PC-3 (cell line): ENCODE measurements at regions of chr3 and their contacts with region 1.

Region 1: GRCh38 chr3:134473868-134474546 is 11.8 kb downstream of the ANAPC13 start:
- DNase-seq: peak; percentile 90
- ATAC-seq: peak; percentile 26
- H3K4me3 ChIP-seq: no peak overlapping the region
- H3K27ac ChIP-seq: no peak overlapping the region
- H3K4me1 ChIP-seq: peaks cover 26% of the 10 kb centered on the region
- H3K27me3 ChIP-seq: no peaks in the 10 kb centered on the region
- CTCF ChIP-seq: peak; percentile 77

Region 2: DNA sequence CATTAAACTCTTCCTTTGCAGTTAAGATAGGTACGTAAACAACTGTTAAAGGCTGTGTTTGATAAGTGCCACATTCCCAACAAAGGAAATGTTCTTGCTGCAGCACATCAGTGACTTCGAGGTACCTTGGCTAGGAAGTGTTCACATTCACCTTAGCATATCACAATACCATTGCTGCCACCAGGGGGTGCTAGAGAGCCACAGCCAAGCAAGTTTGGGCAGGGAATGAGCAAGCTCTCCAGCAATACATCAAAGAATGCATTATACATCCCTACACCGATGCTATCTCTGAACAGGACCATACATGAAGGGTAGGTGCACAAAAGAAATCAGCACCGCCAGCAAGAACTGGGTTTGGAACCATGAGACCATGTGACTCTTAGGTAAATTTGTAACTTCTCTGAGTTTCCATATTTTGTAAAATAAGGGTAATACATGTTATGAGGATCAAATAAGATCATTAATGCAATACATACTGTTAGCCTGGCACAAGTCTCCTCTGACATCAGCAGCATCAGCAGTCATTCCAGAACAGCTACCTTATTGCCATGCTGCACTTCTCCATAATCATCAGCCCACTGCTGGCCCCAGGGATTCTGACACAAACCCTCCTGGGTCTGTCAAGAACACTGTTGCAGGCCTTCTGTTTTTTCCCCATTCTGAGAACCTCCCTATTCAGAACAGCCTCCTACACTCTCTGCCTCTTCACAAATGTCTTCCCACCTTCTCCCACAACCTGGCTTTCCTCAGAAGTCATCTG is 260.9 kb before region 1 on chr3:
- CTCF ChIA-PET with region 1: no interaction called
- POLR2A ChIA-PET with region 1: no interaction called
- intact Hi-C with region 1: loop called (anchors 2 kb)
- DNase-seq: peak; percentile 86
- ATAC-seq: peak; percentile 96
- H3K4me3 ChIP-seq: no peak overlapping the region
- H3K27ac ChIP-seq: no peak overlapping the region
- H3K4me1 ChIP-seq: no peaks in the 10 kb centered on the region
- H3K27me3 ChIP-seq: no peaks in the 10 kb centered on the region
- CTCF ChIP-seq: peak; percentile 87

Region 3: DNA sequence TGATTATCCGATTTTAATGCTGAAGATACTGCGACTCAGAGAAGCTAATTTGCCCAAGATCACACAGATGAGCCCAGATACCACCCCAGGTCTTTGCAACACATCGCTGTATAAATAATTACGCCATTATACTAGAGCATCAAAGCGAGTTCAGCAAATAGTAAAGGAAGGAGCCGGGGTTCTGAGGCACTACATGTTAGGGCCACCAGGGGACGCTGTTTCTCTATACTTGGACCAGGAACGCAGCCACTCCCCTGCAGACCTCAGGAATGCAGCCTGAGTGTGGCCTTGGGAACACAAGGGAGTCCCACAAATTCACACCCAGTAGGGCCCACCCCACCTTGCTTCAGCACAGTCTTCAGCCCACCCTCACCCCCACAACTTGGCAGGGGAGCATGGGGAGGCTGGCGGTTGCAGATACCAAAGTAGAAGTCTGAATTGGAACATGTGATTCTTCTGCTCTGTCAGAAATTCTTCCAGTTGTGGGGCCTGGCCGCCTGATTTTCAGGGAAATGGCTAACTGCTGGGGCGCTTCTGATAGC is 165.6 kb before region 1 on chr3:
- CTCF ChIA-PET with region 1: interaction called, 3 read pairs
- POLR2A ChIA-PET with region 1: no interaction called
- intact Hi-C with region 1: loop called (anchors 1 kb)
- DNase-seq: peak; percentile 86
- ATAC-seq: peak; percentile 75
- H3K4me3 ChIP-seq: peak overlapping the region; percentile 67
- H3K27ac ChIP-seq: no peak overlapping the region
- H3K4me1 ChIP-seq: peaks cover 38% of the 10 kb centered on the region
- H3K27me3 ChIP-seq: no peaks in the 10 kb centered on the region
- CTCF ChIP-seq: peak; percentile 92

Region 4: GRCh38 chr3:134364061-134364935 is 109.7 kb before region 1 on chr3:
- CTCF ChIA-PET with region 1: interaction called, 4 read pairs
- POLR2A ChIA-PET with region 1: interaction called, 3 read pairs
- intact Hi-C with region 1: loop called (anchors 2 kb)
- DNase-seq: peak; percentile 94
- ATAC-seq: peak; percentile 82
- H3K4me3 ChIP-seq: peak overlapping the region; percentile 43
- H3K27ac ChIP-seq: peak overlapping the region; percentile 68
- H3K4me1 ChIP-seq: peaks cover 43% of the 10 kb centered on the region
- H3K27me3 ChIP-seq: no peaks in the 10 kb centered on the region
- CTCF ChIP-seq: no peak

Region 5: GRCh38 chr3:134373994-134374790 is 99.8 kb before region 1 on chr3 and contains the start of gene AMOTL2:
- CTCF ChIA-PET with region 1: interaction called, 5 read pairs
- POLR2A ChIA-PET with region 1: no interaction called
- intact Hi-C with region 1: loop called (anchors 1 kb)
- DNase-seq: peak; percentile 90
- ATAC-seq: peak; percentile 69
- H3K4me3 ChIP-seq: peak within 1 kb of the TSS; percentile 98
- H3K27ac ChIP-seq: peak within 1 kb of the TSS; percentile 89
- H3K4me1 ChIP-seq: peaks cover 61% of the 10 kb centered on the region
- H3K27me3 ChIP-seq: no peaks in the 10 kb centered on the region
- CTCF ChIP-seq: no peak
- total RNA-seq, gene AMOTL2: 96.0 and 124 TPM in 2 replicates

Region 6: DNA sequence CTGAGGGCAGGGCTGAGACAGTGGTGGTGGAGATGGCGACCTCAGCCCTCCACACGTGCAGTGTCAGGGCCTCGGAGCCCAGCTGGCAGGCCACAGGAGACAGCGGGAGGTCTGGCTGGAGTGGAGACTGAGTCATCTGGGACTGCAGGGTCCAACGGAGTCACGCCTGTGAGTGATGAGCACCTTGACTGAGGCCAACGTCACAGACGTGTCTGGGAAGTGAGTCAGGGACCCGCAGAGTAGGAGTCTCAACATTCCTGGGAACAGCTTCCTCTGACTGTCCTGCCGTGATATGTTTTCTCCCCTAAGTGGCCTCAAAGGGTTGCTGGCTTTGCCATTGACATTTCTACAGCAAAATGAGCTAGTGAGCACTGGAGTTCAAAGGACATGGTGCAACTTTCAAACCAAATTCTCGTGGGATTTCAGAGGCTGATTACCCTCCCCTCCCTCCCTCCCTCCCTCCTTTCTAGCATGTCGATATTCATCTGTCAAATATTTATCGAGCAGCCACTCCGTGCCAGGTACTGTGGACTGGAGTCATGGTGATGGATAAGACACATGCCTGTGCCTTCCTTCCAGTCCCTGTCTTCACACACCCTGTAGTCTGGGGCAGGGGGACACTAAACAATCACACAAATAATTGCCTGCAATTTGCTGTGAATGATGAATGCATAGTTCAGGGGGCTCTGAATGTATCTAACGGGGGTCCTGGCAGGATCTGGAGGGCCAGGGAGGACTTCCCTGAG is 46.4 kb before region 1 on chr3:
- CTCF ChIA-PET with region 1: interaction called, 3 read pairs
- POLR2A ChIA-PET with region 1: no interaction called
- intact Hi-C with region 1: loop called (anchors 5 kb)
- DNase-seq: peak; percentile 95
- ATAC-seq: peak; percentile 96
- H3K4me3 ChIP-seq: no peak overlapping the region
- H3K27ac ChIP-seq: peak overlapping the region; percentile 77
- H3K4me1 ChIP-seq: peaks cover 19% of the 10 kb centered on the region
- H3K27me3 ChIP-seq: no peaks in the 10 kb centered on the region
- CTCF ChIP-seq: no peak

Region 7: DNA sequence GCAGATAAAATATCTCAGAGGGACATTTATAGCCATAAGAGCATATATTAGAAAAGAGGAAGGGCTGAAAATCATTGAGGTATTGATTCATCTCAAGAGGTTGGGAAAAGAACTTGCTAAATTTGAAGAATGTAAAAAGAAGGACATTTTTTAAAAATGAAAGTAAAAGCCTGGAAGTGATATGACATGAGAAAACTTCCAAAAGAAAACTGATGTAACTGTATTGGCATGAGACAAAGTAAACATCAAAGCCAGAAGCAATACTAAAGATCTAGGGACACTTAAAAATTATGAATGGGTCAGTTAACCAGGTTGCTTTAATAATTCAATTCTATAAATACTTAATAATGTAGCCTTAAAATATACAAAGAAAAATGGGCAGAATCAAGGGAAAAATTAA is 43.8 kb after region 1 on chr3:
- CTCF ChIA-PET with region 1: no interaction called
- POLR2A ChIA-PET with region 1: no interaction called
- intact Hi-C with region 1: no loop called
- DNase-seq: no peak
- ATAC-seq: no peak
- H3K4me3 ChIP-seq: no peak overlapping the region
- H3K27ac ChIP-seq: no peak overlapping the region
- H3K4me1 ChIP-seq: 0 out of 2 replicates have a peak, but pooled peaks cover 3% of the 10 kb centered on the region
- H3K27me3 ChIP-seq: no peaks in the 10 kb centered on the region
- CTCF ChIP-seq: no peak

Region 8: GRCh38 chr3:134790065-134790464 is 316.1 kb after region 1 on chr3:
- CTCF ChIA-PET with region 1: no interaction called
- POLR2A ChIA-PET with region 1: no interaction called
- intact Hi-C with region 1: no loop called
- DNase-seq: no peak
- ATAC-seq: no peak
- H3K4me3 ChIP-seq: no peak overlapping the region
- H3K27ac ChIP-seq: no peak overlapping the region
- H3K4me1 ChIP-seq: no peaks in the 10 kb centered on the region
- H3K27me3 ChIP-seq: peaks cover 26% of the 10 kb centered on the region
- CTCF ChIP-seq: no peak